ENCODE measurements at regions of chr11 and their contacts with region 1.

Region 1: DNA sequence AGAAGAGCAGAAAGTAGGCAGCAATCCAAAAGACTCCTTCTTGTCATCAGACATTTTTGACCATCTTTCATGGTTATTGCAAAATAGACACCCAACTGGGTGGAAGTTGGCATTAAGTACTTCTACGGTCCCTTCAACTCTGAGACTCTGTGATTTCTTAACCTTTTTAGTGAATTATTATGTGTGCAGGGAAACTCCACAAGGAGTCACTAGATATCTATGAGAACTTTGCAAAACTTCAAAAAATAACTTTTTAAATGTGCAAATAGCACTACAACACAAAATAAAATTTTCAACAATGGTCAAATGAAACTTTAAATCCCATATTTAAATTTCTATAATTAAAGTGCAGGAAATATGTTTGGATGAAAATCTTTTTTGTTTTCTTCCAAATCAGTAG is 88.7 kb downstream of the SLC17A6 start:
- DNase-seq: no peak
- ATAC-seq: no peak
- H3K4me3 Mint-ChIP-seq: no peak overlapping the region
- H3K27ac Mint-ChIP-seq: no peak overlapping the region
- H3K4me1 Mint-ChIP-seq: no peaks in the 10 kb centered on the region
- H3K27me3 Mint-ChIP-seq: peaks cover 4% of the 10 kb centered on the region
- CTCF ChIP-seq: no peak

Region 2: DNA sequence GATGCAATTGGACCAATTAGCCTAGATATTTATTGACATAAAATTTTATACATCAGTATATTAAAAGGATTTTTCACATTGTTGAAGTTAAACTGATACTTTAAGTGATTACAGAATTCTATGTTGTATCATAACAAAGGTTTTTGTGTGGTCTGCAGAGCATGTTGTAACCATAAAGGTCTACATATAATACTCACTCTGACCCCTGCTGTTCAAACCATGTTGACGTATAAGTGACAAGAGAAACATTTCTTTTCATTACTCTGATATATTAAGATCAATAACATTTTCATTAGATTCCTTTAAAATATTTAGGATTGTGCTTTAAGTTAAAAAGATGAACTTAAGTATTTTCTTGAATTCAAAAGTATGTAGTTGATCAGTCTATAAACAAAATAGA is 303.4 kb after region 1 on chr11:
- CTCF ChIA-PET with region 1: no interaction called
- POLR2A ChIA-PET with region 1: no interaction called
- intact Hi-C with region 1: loop called (anchors 1 kb)
- DNase-seq: no peak
- ATAC-seq: no peak
- H3K4me3 Mint-ChIP-seq: no peak overlapping the region
- H3K27ac Mint-ChIP-seq: no peak overlapping the region
- H3K4me1 Mint-ChIP-seq: no peaks in the 10 kb centered on the region
- H3K27me3 Mint-ChIP-seq: no peaks in the 10 kb centered on the region
- CTCF ChIP-seq: no peak